ENCODE measurements at regions of chr1 and their contacts with region 1.

Region 1: GRCh38 chr1:26999440-26999987 is 6.0 kb downstream of the TRNP1 start:
- DNase-seq: peak; percentile 96
- H3K4me3 ChIP-seq: no peak overlapping the region
- CTCF ChIP-seq: peak; percentile 22

Region 2: GRCh38 chr1:26936823-26937222 is 62.7 kb before region 1 on chr1:
- CTCF ChIA-PET with region 1: no interaction called
- POLR2A ChIA-PET with region 1: no interaction called
- DNase-seq: no peak
- H3K4me3 ChIP-seq: no peak overlapping the region
- CTCF ChIP-seq: no peak

Region 3: DNA sequence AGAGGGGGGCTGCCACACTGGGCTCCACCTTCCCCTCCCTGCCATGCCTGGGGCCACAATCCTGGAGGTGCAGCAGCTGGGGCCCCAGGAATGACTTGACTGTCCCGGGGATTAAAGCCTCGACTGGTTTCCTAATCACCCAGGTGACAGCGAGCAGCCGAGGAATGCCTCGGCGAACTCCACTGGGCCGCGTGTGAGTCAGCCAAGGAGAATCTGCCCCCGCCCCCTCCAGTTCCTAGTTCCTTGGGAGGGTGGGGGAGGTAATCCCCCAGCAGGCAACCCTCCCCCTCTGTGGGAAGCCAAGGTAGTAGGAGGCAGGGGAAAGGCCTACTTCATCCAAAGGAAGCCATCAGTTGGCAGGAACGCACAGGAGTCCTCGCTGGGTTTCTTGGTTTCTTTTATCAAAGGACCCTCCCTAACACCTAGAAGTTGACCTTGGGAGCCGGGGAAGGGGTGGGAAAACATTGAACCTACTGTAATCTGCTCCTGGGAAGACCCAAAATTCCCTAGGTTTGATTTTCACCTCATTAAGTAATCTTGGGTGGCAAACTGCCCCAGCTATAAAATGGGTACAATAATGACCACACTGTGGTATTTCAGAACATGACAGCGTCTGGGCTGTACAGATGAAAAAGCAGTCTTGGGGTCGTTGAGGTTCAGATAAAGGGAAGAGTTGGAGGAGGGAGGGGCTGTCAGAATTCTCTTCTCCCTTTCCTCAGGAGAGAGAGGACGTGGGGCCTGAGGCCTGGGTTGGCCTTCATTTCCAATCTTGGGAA is 11.7 kb after region 1 on chr1:
- CTCF ChIA-PET with region 1: interaction called, 122 read pairs
- POLR2A ChIA-PET with region 1: interaction called, 11 read pairs
- DNase-seq: no peak
- H3K4me3 ChIP-seq: peak overlapping the region; percentile 66
- CTCF ChIP-seq: no peak

Region 4: DNA sequence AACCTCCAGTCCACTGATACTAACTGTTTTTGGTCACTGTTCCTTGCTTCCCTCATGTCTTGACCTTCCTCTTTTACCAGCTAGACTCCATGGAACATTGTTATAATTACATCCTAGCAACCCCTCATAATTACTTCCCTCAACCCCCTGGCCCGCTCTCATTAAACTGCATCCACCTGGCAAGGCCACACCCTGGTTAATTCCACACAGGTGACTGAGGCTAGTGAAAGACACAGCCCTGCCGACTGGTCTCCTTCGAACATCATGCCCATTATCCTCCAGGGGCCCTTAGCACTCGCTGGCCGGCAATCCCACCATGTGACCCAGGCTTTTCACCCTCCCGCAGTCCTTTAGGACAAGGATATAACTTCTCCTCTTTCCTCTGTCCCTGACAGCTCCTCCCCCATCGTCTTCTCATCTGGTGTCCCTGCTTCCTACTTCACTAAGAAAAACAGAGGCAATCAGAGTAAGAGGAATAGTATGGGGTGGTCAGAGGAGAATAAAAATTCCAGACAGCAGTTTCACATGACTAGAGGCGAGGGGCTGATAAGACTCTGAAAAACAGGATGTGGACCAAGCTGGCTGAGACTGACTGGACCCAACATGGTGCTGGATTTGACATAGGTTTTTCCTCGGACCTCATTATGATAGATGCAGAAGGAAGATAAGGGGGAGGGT is 22.0 kb after region 1 on chr1:
- CTCF ChIA-PET with region 1: interaction called, 10 read pairs
- POLR2A ChIA-PET with region 1: interaction called, 3 read pairs
- DNase-seq: no peak
- H3K4me3 ChIP-seq: no peak overlapping the region
- CTCF ChIP-seq: no peak

Region 5: DNA sequence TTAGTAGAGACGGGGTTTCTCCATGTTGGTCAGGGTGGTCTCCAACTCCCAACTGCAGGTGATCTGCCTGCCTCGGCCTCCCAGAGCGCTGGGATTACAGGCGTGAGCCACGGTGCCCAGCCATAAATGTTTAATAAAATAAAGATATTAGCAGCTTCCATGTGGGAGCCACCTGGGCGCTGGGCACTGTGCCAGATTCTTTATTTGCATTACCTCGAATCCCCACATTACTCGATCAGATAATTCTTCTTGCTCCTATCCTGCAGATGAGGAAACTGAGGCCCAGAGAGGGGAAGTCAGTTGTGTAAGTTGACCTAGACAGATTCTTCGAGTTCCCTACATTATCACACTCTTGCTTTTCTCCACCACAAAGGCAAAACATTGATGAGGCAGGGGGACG is 38.0 kb after region 1 on chr1:
- CTCF ChIA-PET with region 1: interaction called, 69 read pairs
- POLR2A ChIA-PET with region 1: no interaction called
- DNase-seq: no peak
- H3K4me3 ChIP-seq: no peak overlapping the region
- CTCF ChIP-seq: no peak

Measured in AG04449 (cell line).